AG04449 (cell line): ENCODE measurements at regions of chr11 and their contacts with region 1.

Region 1: DNA sequence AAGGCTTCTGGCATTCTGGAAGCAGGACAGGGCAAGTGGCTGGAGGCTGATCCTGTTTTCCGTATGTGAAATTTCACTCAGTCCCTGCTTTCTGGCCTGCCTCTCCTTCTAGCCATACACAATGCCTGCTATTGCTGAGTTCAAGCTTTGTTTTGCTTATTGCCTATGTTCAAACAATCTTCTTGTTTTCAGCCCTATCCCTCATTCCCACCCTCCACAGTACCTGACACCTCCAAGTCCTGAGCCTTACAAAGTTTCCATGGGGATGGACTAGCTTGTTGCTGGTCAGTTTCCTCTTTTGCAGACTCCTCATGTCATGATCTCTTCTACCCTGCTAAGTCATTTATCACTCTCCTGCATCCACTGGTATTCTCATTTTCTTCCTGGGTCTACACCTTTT is 38.1 kb downstream of the FAM76B start:
- DNase-seq: no peak
- H3K4me3 ChIP-seq: no peak overlapping the region
- CTCF ChIP-seq: no peak

Region 2: GRCh38 chr11:95764267-95764898 is 12.9 kb after region 1 on chr11:
- CTCF ChIA-PET with region 1: interaction called, 10 read pairs
- POLR2A ChIA-PET with region 1: no interaction called
- DNase-seq: no peak
- H3K4me3 ChIP-seq: no peak overlapping the region
- CTCF ChIP-seq: peak; percentile 31

Region 3: DNA sequence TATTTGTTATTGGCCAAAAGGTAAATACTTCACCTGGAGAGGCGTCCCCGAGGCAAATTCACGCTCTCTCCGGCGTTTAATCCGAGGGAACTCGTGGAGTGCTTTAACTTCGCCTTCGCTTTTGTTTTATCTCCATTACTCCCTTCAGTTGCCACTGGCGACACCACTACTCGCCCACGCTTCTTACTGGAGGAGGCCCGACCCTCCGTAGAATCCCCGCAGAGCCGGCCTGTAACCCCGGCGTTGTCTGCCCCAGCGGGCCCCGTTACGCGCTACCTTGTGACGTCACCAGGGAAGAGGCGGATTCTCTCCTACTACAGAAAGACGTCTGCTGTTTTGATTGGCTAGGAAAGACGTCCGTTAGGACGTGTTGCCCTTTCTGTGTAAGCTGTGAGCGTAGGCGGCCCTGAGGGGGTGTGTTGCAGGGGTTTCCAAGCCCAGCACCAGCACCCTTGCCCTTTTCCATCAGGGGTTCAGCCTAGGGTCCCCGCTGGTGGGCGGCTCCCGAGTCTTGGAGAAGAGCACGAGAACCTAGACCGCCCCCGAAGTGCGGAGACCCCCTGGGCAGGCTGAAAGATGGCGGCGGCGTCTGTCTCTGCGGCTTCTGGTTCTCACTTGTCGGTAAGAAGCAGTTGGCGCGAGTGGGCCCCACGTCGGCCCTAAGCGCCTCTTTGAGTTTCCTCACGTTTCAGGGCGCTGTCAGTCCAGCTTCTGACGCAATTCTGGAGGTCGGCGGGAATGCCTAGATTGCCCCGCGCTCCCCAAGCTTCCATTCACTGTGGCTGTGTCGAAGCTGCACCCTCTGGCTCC is 38.8 kb after region 1 on chr11 and contains the start of gene CEP57:
- CTCF ChIA-PET with region 1: no interaction called
- POLR2A ChIA-PET with region 1: no interaction called
- DNase-seq: peak; percentile 94
- H3K4me3 ChIP-seq: peak within 1 kb of the TSS; percentile 85
- CTCF ChIP-seq: no peak